Activated CD4-positive, alpha-beta T cell treated with anti-CD3 and anti-CD28 coated beads for 36 hours (primary cell): ENCODE measurements at regions of chr22 and their contacts with region 1.

Region 1: GRCh38 chr22:26428515-26429457 is at the start of gene ASPHD2:
- DNase-seq: peak; percentile 89
- ATAC-seq: peak; percentile 86
- H3K4me3 Mint-ChIP-seq: peak within 1 kb of the TSS; percentile 90
- H3K27ac Mint-ChIP-seq: peak within 1 kb of the TSS; percentile 93
- H3K4me1 Mint-ChIP-seq: peaks cover 48% of the 10 kb centered on the region
- H3K27me3 Mint-ChIP-seq: no peaks in the 10 kb centered on the region
- total RNA-seq, gene ASPHD2: 10.2 to 10.5 TPM

Region 2: DNA sequence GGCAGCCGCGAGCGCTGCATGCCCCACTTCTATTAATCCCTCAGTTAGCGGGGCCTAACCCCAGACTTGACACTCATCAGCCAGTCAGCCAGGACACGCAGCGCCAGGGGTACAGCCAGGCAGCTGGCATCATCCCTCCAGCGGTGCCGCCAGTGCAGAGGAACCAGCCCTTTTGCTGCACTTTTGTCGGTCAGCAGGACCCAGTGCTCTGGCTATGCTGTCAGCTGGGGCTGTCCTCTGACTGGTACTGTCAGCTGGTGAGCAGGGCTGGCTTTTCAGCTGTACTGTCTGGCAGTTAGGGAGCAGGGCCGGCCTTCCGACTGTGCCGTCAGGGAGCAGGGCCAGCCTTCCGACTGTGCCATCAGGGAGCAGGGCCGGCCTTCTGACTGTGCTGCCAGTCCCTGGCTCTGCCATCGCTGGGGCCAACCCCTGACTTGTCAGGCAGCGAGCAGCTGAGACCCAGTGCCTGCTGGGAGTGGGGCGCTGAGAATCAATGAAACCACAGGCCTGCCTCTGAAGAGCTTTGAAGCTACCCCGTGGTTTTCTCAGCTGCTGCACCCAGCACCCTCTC is 1360.8 kb before region 1 on chr22:
- CTCF ChIA-PET with region 1: no interaction called
- POLR2A ChIA-PET with region 1: no interaction called
- intact Hi-C with region 1: loop called in 1 of 2 experiments (anchors 10 kb)
- DNase-seq: peak; percentile 90
- ATAC-seq: peak; percentile 74
- H3K4me3 Mint-ChIP-seq: peak overlapping the region; percentile 78
- H3K27ac Mint-ChIP-seq: peak overlapping the region; percentile 93
- H3K4me1 Mint-ChIP-seq: peaks cover 88% of the 10 kb centered on the region
- H3K27me3 Mint-ChIP-seq: no peaks in the 10 kb centered on the region

Region 3: DNA sequence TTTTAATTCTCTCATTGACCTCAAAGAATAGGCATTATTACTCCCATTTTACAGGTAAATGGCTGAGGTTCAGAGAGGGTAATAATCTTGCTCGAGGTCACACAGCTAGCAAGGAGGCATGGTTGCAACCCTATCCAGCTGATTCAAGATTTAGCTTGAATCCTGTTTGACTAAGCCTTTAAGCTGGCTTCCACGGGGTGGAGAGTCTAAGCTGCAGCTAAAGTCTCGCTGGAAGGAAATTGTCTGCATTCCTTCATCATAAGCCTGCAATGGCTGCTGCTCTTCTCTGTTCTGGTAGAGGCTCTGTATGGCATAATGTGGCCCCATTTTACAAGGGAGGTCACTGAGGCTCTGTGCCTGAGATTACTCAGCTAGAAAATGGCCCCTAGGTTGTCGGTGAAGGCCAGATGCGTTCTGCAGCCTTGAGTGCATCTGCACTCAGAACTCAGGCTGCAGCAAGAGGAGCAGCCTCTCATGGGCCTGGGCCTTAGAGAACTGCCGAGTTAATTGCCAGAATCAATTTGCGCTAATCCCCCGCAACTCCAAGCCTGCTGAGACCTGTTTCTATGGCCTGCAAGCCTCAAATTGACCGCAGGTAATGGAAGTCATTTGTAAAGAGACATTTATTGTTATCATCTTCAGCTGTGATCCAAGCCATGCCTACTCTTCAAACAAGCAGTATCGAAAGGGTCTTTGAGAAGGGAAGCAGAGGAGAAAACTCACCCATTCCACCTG is 303.6 kb before region 1 on chr22:
- CTCF ChIA-PET with region 1: no interaction called
- POLR2A ChIA-PET with region 1: no interaction called
- intact Hi-C with region 1: no loop called
- DNase-seq: no peak
- ATAC-seq: no peak
- H3K4me3 Mint-ChIP-seq: no peak overlapping the region
- H3K27ac Mint-ChIP-seq: no peak overlapping the region
- H3K4me1 Mint-ChIP-seq: no peaks in the 10 kb centered on the region
- H3K27me3 Mint-ChIP-seq: no peaks in the 10 kb centered on the region

Region 4: GRCh38 chr22:26364066-26365015 is 64.4 kb before region 1 on chr22:
- CTCF ChIA-PET with region 1: interaction called, 4 read pairs
- POLR2A ChIA-PET with region 1: no interaction called
- intact Hi-C with region 1: loop called in 1 of 2 experiments (anchors 2 kb)
- DNase-seq: peak; percentile 73
- ATAC-seq: peak; percentile 84
- H3K4me3 Mint-ChIP-seq: no peak overlapping the region
- H3K27ac Mint-ChIP-seq: no peak overlapping the region
- H3K4me1 Mint-ChIP-seq: peaks cover 6% of the 10 kb centered on the region
- H3K27me3 Mint-ChIP-seq: peaks cover 8% of the 10 kb centered on the region

Region 5: DNA sequence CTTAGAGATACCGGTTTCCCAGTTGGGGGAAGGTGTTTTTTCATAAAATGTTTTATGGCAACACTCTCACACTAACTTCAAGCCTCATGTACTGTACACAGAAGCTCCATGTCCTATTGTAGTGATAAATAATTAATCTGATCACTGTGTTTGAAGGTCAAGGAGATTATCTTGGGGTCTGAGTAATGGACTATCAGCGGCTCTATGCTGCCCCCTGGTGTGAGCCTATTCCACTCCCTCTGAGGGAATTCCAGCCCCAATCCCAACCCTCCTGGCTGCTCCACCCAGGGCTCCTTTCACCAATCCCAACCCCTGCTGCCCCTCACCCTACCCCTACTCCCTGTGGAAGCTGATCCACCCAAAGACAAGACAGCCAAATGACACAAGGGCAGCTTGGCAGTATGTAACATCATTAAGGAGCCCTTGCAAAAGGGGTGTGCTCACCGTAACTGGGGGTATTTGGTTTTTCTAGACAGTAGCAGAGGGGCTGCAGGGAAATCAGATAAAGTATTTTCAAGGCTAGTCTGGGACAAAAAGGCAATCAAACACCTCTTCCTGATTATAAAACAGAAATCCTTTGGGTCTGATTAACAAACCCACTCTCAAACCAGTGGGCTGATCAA is 32.5 kb after region 1 on chr22:
- CTCF ChIA-PET with region 1: interaction called, 10 read pairs
- POLR2A ChIA-PET with region 1: no interaction called
- intact Hi-C with region 1: no loop called
- DNase-seq: peak; percentile 61
- ATAC-seq: no peak
- H3K4me3 Mint-ChIP-seq: no peak overlapping the region
- H3K27ac Mint-ChIP-seq: no peak overlapping the region
- H3K4me1 Mint-ChIP-seq: no peaks in the 10 kb centered on the region
- H3K27me3 Mint-ChIP-seq: no peaks in the 10 kb centered on the region

Region 6: GRCh38 chr22:26511857-26512793 is 83.3 kb after region 1 on chr22 and contains the start of gene TFIP11:
- CTCF ChIA-PET with region 1: no interaction called
- POLR2A ChIA-PET with region 1: no interaction called
- intact Hi-C with region 1: loop called in 1 of 2 experiments (anchors 1 kb)
- DNase-seq: peak; percentile 97
- ATAC-seq: peak; percentile 98
- H3K4me3 Mint-ChIP-seq: peak within 1 kb of the TSS; percentile 95
- H3K27ac Mint-ChIP-seq: peak within 1 kb of the TSS; percentile 95
- H3K4me1 Mint-ChIP-seq: peaks cover 27% of the 10 kb centered on the region
- H3K27me3 Mint-ChIP-seq: no peaks in the 10 kb centered on the region
- total RNA-seq, gene TFIP11: 36.5 to 41.7 TPM

Region 7: GRCh38 chr22:26658671-26659478 is 230.1 kb after region 1 on chr22:
- CTCF ChIA-PET with region 1: no interaction called
- POLR2A ChIA-PET with region 1: no interaction called
- intact Hi-C with region 1: loop called in 1 of 2 experiments (anchors 1 kb)
- DNase-seq: peak; percentile 92
- ATAC-seq: peak; percentile 88
- H3K4me3 Mint-ChIP-seq: peak overlapping the region; percentile 81
- H3K27ac Mint-ChIP-seq: peak overlapping the region; percentile 82
- H3K4me1 Mint-ChIP-seq: peaks cover 23% of the 10 kb centered on the region
- H3K27me3 Mint-ChIP-seq: peaks cover 8% of the 10 kb centered on the region